Gastrocnemius medialis (tissue), 4 donors: ENCODE measurements at regions of chr17 and their contacts with region 1.

Region 1: GRCh38 chr17:34314279-34314678 is 5.0 kb upstream of the CCL8 start:
- DNase-seq: peak; percentile 10 to 45
- ATAC-seq: peak; percentile 50 to 61
- H3K4me3 ChIP-seq: no peak overlapping the region
- H3K27ac ChIP-seq: peak overlapping the region; percentile 34 to 68 (median 59)
- H3K4me1 ChIP-seq: peaks cover 0 to 28% of the 10 kb centered on the region in 2 donors
- H3K27me3 ChIP-seq: no peaks in the 10 kb centered on the region
- CTCF ChIP-seq: no peak
- POLR2A ChIP-seq: no peak

Region 2: DNA sequence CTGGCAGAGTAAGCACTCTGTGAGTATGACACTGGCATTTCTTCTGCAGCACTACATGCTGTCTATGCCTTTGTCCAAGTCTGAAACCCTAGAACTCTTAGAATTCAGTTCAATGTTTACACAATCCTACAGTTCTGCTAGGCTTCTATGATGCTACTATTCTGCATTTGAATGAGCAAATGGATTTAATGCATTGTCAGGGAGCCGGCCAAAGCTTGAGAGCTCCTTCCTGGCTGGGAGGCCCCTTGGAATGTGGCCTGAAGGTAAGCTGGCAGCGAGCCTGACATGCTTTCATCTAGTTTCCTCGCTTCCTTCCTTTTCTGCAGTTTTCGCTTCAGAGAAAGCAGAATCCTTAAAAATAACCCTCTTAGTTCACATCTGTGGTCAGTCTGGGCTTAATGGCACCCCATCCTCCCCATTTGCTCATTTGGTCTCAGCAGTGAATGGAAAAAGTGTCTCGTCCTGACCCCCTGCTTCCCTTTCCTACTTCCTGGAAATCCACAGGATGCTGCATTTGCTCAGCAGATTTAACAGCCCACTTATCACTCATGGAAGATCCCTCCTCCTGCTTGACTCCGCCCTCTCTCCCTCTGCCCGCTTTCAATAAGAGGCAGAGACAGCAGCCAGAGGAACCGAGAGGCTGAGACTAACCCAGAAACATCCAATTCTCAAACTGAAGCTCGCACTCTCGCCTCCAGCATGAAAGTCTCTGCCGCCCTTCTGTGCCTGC is 59.5 kb before region 1 on chr17 and contains the start of gene CCL2:
- in situ Hi-C with region 1: no loop called
- intact Hi-C with region 1: loop called (anchors 5 kb)
- DNase-seq: peak; percentile 53 to 59
- ATAC-seq: peak; percentile 27 to 34
- H3K4me3 ChIP-seq: peak within 1 kb of the TSS; percentile 24 to 48 (median 37)
- H3K27ac ChIP-seq: peak within 1 kb of the TSS; percentile 67 to 83 (median 77)
- H3K4me1 ChIP-seq: peaks cover 34 to 59% of the 10 kb centered on the region in 2 donors
- H3K27me3 ChIP-seq: no peaks in the 10 kb centered on the region
- CTCF ChIP-seq: no peak
- POLR2A ChIP-seq: peak in 1 of 2 donors; percentile 63
- total RNA-seq, gene CCL2: 1.1 to 5.8 (median 4.1) TPM

Region 3: DNA sequence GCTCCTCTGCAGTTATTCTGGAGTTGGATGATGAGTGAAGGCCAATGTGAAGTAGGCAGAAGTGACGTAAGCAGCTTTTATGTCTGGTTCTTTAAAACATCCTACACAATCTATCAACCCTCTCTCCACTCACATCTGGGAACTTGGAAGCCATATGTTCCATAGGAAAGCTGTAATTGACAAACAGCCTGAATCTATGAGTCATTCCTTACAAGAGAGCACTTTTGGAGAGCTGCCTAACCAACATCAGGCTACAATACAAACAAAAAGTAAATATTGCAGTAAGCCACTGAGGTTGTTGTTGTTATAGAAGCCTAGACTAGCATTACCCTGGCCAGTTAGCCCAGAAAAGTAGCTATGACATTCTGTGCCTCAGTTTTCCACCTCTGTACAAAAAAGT is 38.4 kb before region 1 on chr17:
- in situ Hi-C with region 1: no loop called
- intact Hi-C with region 1: no loop called
- DNase-seq: no peak
- ATAC-seq: no peak
- H3K4me3 ChIP-seq: no peak overlapping the region
- H3K27ac ChIP-seq: no peak overlapping the region
- H3K4me1 ChIP-seq: no peaks in the 10 kb centered on the region
- H3K27me3 ChIP-seq: no peaks in the 10 kb centered on the region
- CTCF ChIP-seq: no peak
- POLR2A ChIP-seq: no peak